H1 (cell line): ENCODE measurements at regions of chr20 and their contacts with region 1.

Region 1: GRCh38 chr20:19583532-19584175 is 174.4 kb upstream of the RIN2 start:
- DNase-seq: peak; percentile 72 to 96
- H3K4me3 ChIP-seq: no peak overlapping the region
- H3K27ac ChIP-seq: no peak overlapping the region
- H3K4me1 ChIP-seq: peaks cover 0 to 5% (median 3%) of the 10 kb centered on the region in 4 experiments; a peak in 5 of 7 replicates
- H3K27me3 ChIP-seq: no peaks in the 10 kb centered on the region
- CTCF ChIP-seq: peak; percentile 86 to 99 (median 98)
- EP300 ChIP-seq: no peak
- POLR2A ChIP-seq: no peak
- RAD21 ChIP-seq: peak; percentile 95 to 97

Region 2: GRCh38 chr20:19205977-19206396 is 377.7 kb before region 1 on chr20:
- CTCF ChIA-PET with region 1: interaction called, 66 read pairs
- POLR2A ChIA-PET with region 1: no interaction called
- DNase-seq: peak in 1 of 2 experiments; percentile 98
- H3K4me3 ChIP-seq: no peak overlapping the region
- H3K27ac ChIP-seq: no peak overlapping the region
- H3K4me1 ChIP-seq: peaks cover 9 to 25% (median 14%) of the 10 kb centered on the region in 4 experiments
- H3K27me3 ChIP-seq: peaks cover 0 to 2% (median 0%) of the 10 kb centered on the region in 4 experiments; a peak in 2 of 7 replicates
- CTCF ChIP-seq: peak; percentile 89 to 93 (median 89)
- EP300 ChIP-seq: no peak
- POLR2A ChIP-seq: no peak
- RAD21 ChIP-seq: peak; percentile 89 to 93

Region 3: DNA sequence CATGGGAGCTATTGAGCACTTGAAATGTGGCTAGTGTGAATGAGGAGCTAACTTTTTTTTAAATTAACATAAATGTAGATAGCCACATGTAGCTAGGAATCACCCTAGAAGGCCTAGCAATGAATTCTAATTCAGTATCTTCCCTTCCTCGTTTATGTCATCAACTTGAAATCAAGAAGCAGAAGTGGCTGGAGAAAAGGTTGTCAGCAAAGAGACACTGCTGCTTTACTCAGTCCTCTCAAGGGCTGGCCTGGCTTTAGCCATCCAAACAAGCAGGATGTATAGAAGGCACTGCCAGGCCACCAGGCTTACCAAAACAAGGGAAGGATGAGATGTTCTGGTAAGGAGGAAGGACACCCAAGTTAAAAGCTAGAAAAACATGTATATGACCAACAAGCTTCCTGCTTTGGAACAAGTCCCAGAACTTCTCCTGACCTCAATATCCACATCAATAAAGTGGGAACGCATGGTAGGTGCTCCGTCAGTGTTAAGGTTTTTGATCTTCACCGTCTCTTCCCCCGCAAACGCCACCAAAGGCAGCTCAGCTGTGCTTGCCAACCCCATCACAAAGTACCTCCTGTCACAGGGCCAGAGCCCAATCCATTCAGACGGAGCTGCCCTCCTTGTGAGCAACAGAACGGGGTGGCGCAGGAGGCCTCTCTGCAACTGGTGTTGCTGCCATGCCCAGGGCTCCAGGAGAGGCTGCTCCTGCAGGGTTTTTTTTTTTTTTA is 61.4 kb before region 1 on chr20:
- CTCF ChIA-PET with region 1: interaction called, 10 read pairs
- POLR2A ChIA-PET with region 1: no interaction called
- DNase-seq: no peak
- H3K4me3 ChIP-seq: no peak overlapping the region
- H3K27ac ChIP-seq: no peak overlapping the region
- H3K4me1 ChIP-seq: no peaks in the 10 kb centered on the region
- H3K27me3 ChIP-seq: no peaks in the 10 kb centered on the region
- CTCF ChIP-seq: no peak
- EP300 ChIP-seq: no peak
- POLR2A ChIP-seq: no peak
- RAD21 ChIP-seq: no peak

Region 4: DNA sequence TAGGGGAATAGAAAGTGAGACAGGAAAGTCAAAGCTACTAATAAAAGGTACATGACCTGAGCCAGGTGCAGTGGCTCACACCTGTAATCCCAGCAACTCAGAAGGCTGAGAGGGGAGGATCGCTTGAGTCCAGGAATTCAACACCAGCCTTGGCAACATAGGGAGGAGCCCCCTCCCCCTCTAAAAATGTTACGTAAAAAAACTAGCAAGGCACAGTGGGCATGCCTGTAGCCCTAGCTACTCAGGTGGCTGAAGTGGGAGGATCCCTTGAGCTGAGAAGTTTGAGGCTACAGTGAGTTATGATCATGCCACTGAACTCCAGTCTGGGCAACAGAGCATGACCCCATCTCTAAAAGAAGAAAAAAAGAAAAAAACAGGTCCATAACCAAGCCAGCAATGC is 11.7 kb before region 1 on chr20:
- CTCF ChIA-PET with region 1: interaction called, 12 read pairs
- POLR2A ChIA-PET with region 1: no interaction called
- DNase-seq: no peak
- H3K4me3 ChIP-seq: no peak overlapping the region
- H3K27ac ChIP-seq: no peak overlapping the region
- H3K4me1 ChIP-seq: no peaks in the 10 kb centered on the region
- H3K27me3 ChIP-seq: no peaks in the 10 kb centered on the region
- CTCF ChIP-seq: no peak
- EP300 ChIP-seq: no peak
- POLR2A ChIP-seq: no peak
- RAD21 ChIP-seq: no peak

Region 5: GRCh38 chr20:19598117-19598850 is 14.6 kb after region 1 on chr20:
- CTCF ChIA-PET with region 1: interaction called, 46 read pairs
- POLR2A ChIA-PET with region 1: no interaction called
- DNase-seq: no peak
- H3K4me3 ChIP-seq: no peak overlapping the region
- H3K27ac ChIP-seq: no peak overlapping the region
- H3K4me1 ChIP-seq: peaks cover 0 to 3% (median 1%) of the 10 kb centered on the region in 4 experiments; a peak in 3 of 7 replicates
- H3K27me3 ChIP-seq: no peaks in the 10 kb centered on the region
- CTCF ChIP-seq: no peak
- EP300 ChIP-seq: no peak
- POLR2A ChIP-seq: no peak
- RAD21 ChIP-seq: no peak